ENCODE measurements at regions of chr15 and their contacts with region 1.

Region 1: DNA sequence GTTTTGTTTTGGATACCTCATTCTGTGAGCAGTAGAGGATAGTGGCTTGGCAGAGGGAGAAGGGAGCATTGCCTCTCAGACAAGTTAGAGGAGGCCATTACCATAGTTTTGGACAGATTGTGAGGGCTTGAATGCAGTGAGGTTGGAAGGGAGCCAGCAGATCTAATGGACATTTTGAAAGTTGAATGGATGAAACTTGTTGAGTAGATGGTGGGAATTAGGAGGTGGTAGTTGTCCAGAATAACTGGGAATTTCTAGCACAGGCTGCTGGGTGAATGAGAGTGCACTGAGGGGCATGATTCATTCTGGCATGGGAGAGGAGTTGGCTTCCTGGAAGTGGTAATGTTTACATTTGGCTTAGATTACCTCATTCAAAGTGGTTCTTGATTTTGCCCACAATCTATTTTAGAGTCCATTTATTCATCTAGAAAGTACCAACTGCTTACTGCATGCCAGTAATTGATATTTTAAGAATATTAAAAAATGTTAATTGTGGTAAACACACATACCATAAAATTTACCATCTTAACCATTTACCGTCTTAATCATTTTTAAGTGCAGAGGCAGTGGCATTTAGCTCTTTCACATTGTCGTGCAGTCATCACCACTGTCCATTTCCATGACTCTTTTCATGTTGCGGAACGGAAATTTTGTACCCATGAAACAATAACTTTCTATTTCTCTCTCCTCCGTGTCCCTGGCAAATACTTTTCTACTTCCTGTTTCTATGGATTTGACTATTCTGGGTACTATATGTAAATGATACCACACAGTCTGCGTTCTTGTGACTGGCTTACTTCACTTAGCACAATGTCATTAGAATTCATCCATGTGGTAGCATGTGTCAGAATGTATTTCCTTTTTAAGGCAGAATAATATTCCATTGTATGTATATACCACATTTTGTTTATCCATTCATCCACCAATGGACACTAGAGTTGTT is 27.7 kb downstream of the AKAP13 start:
- DNase-seq: peak; percentile 84
- ATAC-seq: peak; percentile 77
- H3K4me3 ChIP-seq: peak overlapping the region; percentile 36; the same call in 1 of the 2 replicates
- H3K27ac ChIP-seq: peak overlapping the region; percentile 75
- H3K4me1 ChIP-seq: peaks cover 81% of the 10 kb centered on the region
- H3K27me3 ChIP-seq: no peaks in the 10 kb centered on the region
- CTCF ChIP-seq: no peak
- EP300 ChIP-seq: peak in 1 of 2 experiments; percentile 75; a peak in 3 of 4 replicates
- POLR2A ChIP-seq: no peak
- RAD21 ChIP-seq: no peak

Region 2: GRCh38 chr15:85312486-85312885 is 95.6 kb before region 1 on chr15:
- CTCF ChIA-PET with region 1: interaction called, 48 read pairs
- POLR2A ChIA-PET with region 1: interaction called, 16 read pairs
- RAD21 ChIA-PET with region 1: interaction called, 112 read pairs
- SMC1A ChIA-PET with region 1: interaction called, 78 read pairs
- in situ Hi-C with region 1: no loop called
- intact Hi-C with region 1: no loop called
- DNase-seq: peak; percentile 77
- ATAC-seq: peak; percentile 98
- H3K4me3 ChIP-seq: peak overlapping the region; percentile 39
- H3K27ac ChIP-seq: peak overlapping the region; percentile 84
- H3K4me1 ChIP-seq: peaks cover 36% of the 10 kb centered on the region
- H3K27me3 ChIP-seq: no peaks in the 10 kb centered on the region
- CTCF ChIP-seq: no peak
- EP300 ChIP-seq: peak in 1 of 2 experiments; percentile 41; a peak in 1 of 4 replicates
- POLR2A ChIP-seq: peak; percentile 38; the same call in 1 of the 2 replicates
- RAD21 ChIP-seq: no peak

Region 3: DNA sequence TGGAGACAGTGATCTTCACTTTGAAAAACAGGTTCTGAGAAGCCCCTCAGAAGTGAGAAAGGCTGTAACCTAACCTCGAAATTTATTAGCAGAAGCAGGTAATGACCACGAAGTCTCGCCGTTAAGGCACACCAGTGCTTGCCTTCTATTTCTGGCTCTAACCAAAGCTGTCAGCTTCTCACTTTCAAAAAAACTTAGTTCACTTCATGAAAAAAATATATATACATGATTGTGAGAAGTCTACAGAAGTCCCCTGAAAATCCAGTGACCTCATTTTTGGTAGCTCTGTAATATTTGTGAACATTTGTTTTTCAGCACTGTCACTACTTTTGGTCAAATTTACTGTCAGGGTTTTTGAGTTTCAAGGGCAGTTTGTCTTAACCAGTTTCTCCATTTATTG is 46.8 kb before region 1 on chr15:
- CTCF ChIA-PET with region 1: interaction called, 8 read pairs
- POLR2A ChIA-PET with region 1: interaction called, 3 read pairs
- RAD21 ChIA-PET with region 1: interaction called, 32 read pairs
- SMC1A ChIA-PET with region 1: interaction called, 12 read pairs
- in situ Hi-C with region 1: no loop called
- intact Hi-C with region 1: no loop called
- DNase-seq: peak; percentile 66
- ATAC-seq: peak; percentile 87
- H3K4me3 ChIP-seq: peak overlapping the region; percentile 40; the same call in 1 of the 2 replicates
- H3K27ac ChIP-seq: peak overlapping the region; percentile 72
- H3K4me1 ChIP-seq: peaks cover 32% of the 10 kb centered on the region
- H3K27me3 ChIP-seq: no peaks in the 10 kb centered on the region
- CTCF ChIP-seq: no peak
- EP300 ChIP-seq: peak; percentile 60 to 81; a peak in 2 of 4 replicates
- POLR2A ChIP-seq: no peak
- RAD21 ChIP-seq: no peak

Region 4: DNA sequence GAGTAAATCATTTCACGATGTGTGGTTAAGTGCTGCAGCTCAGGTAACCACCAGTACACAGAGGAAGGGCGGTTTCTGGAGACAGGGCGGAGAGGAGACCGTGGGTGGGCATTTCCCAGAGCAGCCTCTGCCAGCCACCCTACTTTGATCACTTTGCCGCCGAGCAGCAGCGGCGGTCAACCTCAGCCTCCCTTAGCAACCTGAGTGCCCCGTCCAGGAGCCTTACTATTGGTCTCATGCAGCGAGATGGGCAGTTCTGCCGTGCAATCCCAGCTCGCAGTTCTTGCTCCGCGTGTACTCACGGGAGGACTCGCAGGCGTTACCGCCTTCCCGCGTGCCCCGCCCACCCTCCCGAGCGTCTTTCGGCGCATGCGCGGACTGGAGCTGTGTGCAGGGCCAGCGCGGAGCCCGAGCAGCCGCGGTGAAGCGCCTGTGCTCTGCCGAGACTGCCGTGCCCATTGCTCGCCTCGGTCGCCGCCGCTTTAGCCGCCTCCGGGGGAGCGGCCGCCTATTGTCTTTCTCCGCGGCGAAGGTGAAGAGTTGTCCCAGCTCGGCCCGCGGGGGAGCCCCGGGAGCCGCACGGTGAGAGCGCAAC is 27.8 kb before region 1 on chr15 and contains the start of gene AKAP13:
- CTCF ChIA-PET with region 1: interaction called, 80 read pairs
- POLR2A ChIA-PET with region 1: interaction called, 47 read pairs
- RAD21 ChIA-PET with region 1: interaction called, 121 read pairs
- SMC1A ChIA-PET with region 1: interaction called, 70 read pairs
- in situ Hi-C with region 1: no loop called
- intact Hi-C with region 1: loop called (anchors 1 kb)
- DNase-seq: peak; percentile 98
- ATAC-seq: peak; percentile 89
- H3K4me3 ChIP-seq: peak within 1 kb of the TSS; percentile 80
- H3K27ac ChIP-seq: peak within 1 kb of the TSS; percentile 78
- H3K4me1 ChIP-seq: peaks cover 12% of the 10 kb centered on the region; the same call in 1 of the 2 replicates
- H3K27me3 ChIP-seq: no peaks in the 10 kb centered on the region; a peak in 2 of 4 replicates
- CTCF ChIP-seq: no peak
- EP300 ChIP-seq: no peak
- POLR2A ChIP-seq: peak; percentile 88
- RAD21 ChIP-seq: no peak
- polyA plus RNA-seq, gene AKAP13: 14.4 to 21.5 TPM

Region 5: GRCh38 chr15:85388566-85389305 is 19.3 kb before region 1 on chr15:
- CTCF ChIA-PET with region 1: interaction called, 80 read pairs
- POLR2A ChIA-PET with region 1: interaction called, 47 read pairs
- RAD21 ChIA-PET with region 1: interaction called, 121 read pairs
- SMC1A ChIA-PET with region 1: interaction called, 55 read pairs
- in situ Hi-C with region 1: no loop called
- intact Hi-C with region 1: loop called (anchors 2 kb)
- DNase-seq: no peak
- ATAC-seq: no peak; the same call in 2 of the 3 replicates
- H3K4me3 ChIP-seq: peak overlapping the region; percentile 49; the same call in 1 of the 2 replicates
- H3K27ac ChIP-seq: no peak overlapping the region
- H3K4me1 ChIP-seq: peaks cover 24% of the 10 kb centered on the region
- H3K27me3 ChIP-seq: no peaks in the 10 kb centered on the region
- CTCF ChIP-seq: no peak
- EP300 ChIP-seq: no peak
- POLR2A ChIP-seq: no peak
- RAD21 ChIP-seq: no peak

Region 6: DNA sequence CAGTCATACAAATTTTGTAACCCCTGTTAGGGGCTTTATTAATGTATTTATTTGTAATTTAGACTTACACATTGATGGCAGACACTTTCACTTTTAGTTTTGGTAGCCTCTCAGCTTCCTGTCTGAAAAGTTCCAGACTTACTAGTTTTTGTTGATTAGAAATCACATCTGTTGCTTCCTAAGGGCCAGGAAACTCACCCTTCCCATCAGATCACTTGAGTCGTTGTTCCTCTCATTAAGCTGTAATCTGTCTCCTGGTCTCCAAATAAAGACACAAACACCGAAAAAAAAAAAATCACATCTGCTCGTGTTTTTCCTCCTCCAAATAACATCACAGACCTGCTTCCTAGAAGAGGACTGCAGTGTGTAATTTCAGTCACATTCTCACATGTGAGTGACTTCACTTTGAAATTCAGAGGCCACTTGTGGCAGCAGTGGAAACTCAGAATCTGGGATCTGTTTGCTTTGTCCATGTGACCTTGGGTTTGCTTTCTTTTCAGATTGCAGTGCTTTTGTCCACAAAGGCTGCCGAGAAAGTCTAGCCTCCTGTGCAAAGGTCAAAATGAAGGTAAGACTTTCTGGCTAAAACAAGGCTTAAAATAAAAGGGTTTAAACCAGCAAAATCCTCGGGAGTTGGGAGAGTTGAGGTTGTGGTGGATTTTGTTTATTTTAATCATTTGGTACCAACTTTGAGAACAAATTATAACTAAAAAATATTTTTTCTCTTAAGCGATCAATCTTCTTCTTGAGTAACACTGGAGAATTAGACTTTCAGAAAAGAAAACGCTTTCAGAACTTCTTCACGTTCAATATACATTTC is 299.7 kb after region 1 on chr15:
- CTCF ChIA-PET with region 1: no interaction called
- POLR2A ChIA-PET with region 1: no interaction called
- RAD21 ChIA-PET with region 1: interaction called, 3 read pairs
- SMC1A ChIA-PET with region 1: interaction called, 3 read pairs
- in situ Hi-C with region 1: no loop called
- intact Hi-C with region 1: loop called (anchors 10 kb)
- DNase-seq: no peak
- ATAC-seq: peak; percentile 5
- H3K4me3 ChIP-seq: peak overlapping the region; percentile 60
- H3K27ac ChIP-seq: peak overlapping the region; percentile 99
- H3K4me1 ChIP-seq: peaks cover 66% of the 10 kb centered on the region
- H3K27me3 ChIP-seq: no peaks in the 10 kb centered on the region
- CTCF ChIP-seq: no peak
- EP300 ChIP-seq: no peak
- POLR2A ChIP-seq: no peak
- RAD21 ChIP-seq: no peak

Measured in GM12878 (cell line).